B cell (primary cell): ENCODE measurements at regions of chr3 and their contacts with region 1.

Region 1: DNA sequence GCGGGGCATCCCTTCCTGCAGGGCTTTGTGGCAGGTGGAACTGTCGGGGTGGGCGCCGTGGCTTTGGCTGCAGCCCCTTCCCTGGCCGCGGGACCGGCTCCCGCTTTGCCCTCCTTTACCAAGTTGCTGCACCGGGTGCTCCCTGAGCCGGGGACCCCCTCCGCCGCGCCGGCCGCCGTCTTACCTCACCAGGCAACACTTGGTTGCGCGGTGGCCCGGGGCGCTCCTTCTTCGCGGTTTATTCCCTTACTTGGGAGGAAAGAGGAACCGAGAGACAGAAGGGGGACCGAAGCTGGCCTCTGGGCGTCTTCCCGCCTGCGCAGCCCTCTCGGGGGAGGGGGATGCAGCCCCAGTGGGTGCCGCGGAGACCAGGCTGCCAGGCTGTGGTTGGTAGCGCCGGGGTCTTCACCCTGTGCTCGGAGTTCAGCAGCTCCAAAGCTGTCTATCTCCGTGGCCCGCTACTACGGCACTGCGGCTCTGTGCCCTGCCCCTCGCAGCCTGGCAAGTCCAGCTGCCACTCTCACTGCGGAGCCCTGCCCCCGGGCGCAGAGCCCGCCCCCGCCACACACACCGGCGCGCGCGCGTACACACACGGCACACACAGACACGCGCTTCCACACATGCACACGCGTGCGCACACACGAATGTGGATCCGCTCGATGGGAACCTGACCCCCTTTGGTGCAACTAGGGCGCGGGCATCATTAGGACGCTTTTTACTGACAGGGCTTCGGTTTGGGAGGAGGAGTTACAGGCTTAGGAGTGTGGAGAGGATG is at the start of gene DGKG:
- DNase-seq: peak; percentile 76
- ATAC-seq: peak; percentile 81
- H3K4me3 ChIP-seq: peak within 1 kb of the TSS; percentile 52 to 65 (median 58)
- H3K4me3 Mint-ChIP-seq: peak within 1 kb of the TSS; percentile 87
- H3K27ac ChIP-seq: peak within 1 kb of the TSS in 1 of 2 donors; percentile 9
- H3K27ac Mint-ChIP-seq: peak within 1 kb of the TSS; percentile 67
- H3K4me1 ChIP-seq: peaks cover 19 to 22% of the 10 kb centered on the region in 2 donors
- H3K4me1 Mint-ChIP-seq: peaks cover 24% of the 10 kb centered on the region
- H3K27me3 ChIP-seq: peaks cover 0 to 34% (median 11%) of the 10 kb centered on the region in 4 experiments
- H3K27me3 Mint-ChIP-seq: peaks cover 7% of the 10 kb centered on the region
- CTCF ChIP-seq: no peak
- total RNA-seq, gene DGKG: 10.9 and 11.6 TPM in 2 replicates

Region 2: GRCh38 chr3:186342197-186342596 is 19.8 kb before region 1 on chr3:
- CTCF ChIA-PET with region 1: no interaction called
- POLR2A ChIA-PET with region 1: interaction called, 4 read pairs
- intact Hi-C with region 1: loop called (anchors 1 kb)
- DNase-seq: peak; percentile 50
- ATAC-seq: peak; percentile 47
- H3K4me3 ChIP-seq: no peak overlapping the region
- H3K4me3 Mint-ChIP-seq: peak overlapping the region; percentile 3
- H3K27ac ChIP-seq: peak overlapping the region; percentile 11 to 15
- H3K27ac Mint-ChIP-seq: peak overlapping the region; percentile 33
- H3K4me1 ChIP-seq: peaks cover 22 to 35% of the 10 kb centered on the region in 2 donors
- H3K4me1 Mint-ChIP-seq: peaks cover 51% of the 10 kb centered on the region
- H3K27me3 ChIP-seq: no peaks in the 10 kb centered on the region
- H3K27me3 Mint-ChIP-seq: no peaks in the 10 kb centered on the region
- CTCF ChIP-seq: no peak

Region 3: DNA sequence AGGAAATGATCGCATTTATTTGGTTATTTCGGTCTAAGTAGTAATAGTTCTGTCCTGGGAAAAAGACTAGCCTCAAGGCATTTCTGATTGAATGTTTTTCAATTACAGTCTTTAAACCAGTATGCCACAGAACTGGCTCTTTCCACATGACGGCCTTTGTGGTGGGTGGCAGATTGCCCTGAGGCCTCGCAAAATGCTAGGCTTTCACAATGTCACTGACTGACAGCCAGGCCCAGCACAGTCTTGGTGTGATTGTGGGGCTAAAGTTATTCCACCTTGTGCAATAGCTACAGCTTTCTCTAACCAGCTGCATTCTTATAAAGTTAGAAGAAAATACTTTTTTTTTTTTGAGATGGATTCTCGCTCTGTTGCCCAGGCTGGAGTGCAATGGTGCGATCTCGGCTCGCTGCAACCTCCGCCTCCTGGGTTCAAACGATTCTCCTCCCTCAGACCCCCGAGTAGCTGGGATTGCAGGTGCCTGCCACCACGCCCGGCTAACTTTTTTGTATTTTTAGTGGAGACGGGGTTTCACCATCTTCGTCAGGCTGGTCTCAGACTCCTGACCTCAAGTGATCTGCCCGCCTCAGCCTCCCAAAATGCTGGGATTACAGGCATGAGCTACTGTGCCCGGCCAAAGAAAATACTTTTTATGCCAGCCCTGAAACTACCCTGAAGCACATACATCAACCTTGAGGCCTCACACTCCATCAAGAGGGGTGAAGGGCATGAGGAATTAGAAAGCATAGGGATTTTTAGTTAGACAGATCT is 478.1 kb after region 1 on chr3:
- CTCF ChIA-PET with region 1: no interaction called
- POLR2A ChIA-PET with region 1: no interaction called
- intact Hi-C with region 1: no loop called
- DNase-seq: no peak
- ATAC-seq: no peak
- H3K4me3 ChIP-seq: no peak overlapping the region
- H3K4me3 Mint-ChIP-seq: no peak overlapping the region
- H3K27ac ChIP-seq: no peak overlapping the region
- H3K27ac Mint-ChIP-seq: no peak overlapping the region
- H3K4me1 ChIP-seq: no peaks in the 10 kb centered on the region
- H3K4me1 Mint-ChIP-seq: no peaks in the 10 kb centered on the region
- H3K27me3 ChIP-seq: no peaks in the 10 kb centered on the region
- H3K27me3 Mint-ChIP-seq: peaks cover 14% of the 10 kb centered on the region
- CTCF ChIP-seq: no peak